Right ventricle myocardium inferior (tissue), 1 donor: ENCODE measurements at regions of chr18 and their contacts with region 1.

Region 1: GRCh38 chr18:22547807-22548561 is 130.3 kb upstream of the CTAGE1 start:
- DNase-seq: no peak
- ATAC-seq: no peak

Region 2: GRCh38 chr18:22494771-22495170 is 53.2 kb before region 1 on chr18:
- intact Hi-C with region 1: loop called (anchors 5 kb)
- DNase-seq: no peak
- ATAC-seq: peak; percentile 88

Region 3: GRCh38 chr18:22632191-22632590 is 84.2 kb after region 1 on chr18:
- intact Hi-C with region 1: no loop called
- DNase-seq: no peak
- ATAC-seq: no peak